GM12878 (cell line): ENCODE measurements at regions of chr17 and their contacts with region 1.

Region 1: GRCh38 chr17:37701496-37701898 is 43.4 kb downstream of the HNF1B start:
- DNase-seq: peak; percentile 16
- ATAC-seq: peak; percentile 93
- H3K4me3 ChIP-seq: no peak overlapping the region
- H3K27ac ChIP-seq: no peak overlapping the region
- H3K4me1 ChIP-seq: no peaks in the 10 kb centered on the region
- H3K27me3 ChIP-seq: no peaks in the 10 kb centered on the region
- CTCF ChIP-seq: peak; percentile 78 to 81 (median 80)
- EP300 ChIP-seq: no peak
- POLR2A ChIP-seq: no peak
- RAD21 ChIP-seq: peak; percentile 75

Region 2: DNA sequence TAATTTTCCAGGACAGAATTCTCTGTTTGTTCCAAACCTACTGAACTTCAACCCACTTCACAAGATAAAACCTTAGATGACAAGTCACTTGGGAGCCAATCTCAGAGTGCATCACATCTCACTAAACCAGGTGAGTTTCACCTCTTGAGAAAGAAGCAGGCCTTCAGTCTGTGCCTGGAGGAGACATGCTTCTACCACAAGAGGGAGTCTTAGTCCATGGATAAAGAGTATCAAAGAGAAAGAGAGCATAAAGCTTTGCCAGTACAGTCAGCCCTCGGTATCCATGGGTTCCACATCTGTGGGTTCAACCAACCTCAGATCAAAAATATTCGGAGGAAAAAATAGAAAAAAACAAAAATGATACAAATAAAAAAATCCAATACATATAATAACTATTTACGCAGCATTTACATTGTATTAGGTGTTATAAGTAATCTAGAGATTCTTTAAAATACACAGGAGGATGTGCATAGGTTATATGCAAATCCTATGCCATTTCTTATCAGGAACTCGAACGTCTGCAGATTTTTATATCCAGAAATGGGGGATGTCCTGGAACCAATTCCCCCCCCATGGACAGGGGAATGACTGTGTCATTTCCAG is 174.1 kb before region 1 on chr17:
- CTCF ChIA-PET with region 1: no interaction called
- POLR2A ChIA-PET with region 1: no interaction called
- RAD21 ChIA-PET with region 1: interaction called, 3 read pairs
- SMC1A ChIA-PET with region 1: no interaction called
- in situ Hi-C with region 1: no loop called
- intact Hi-C with region 1: loop called (anchors 10 kb)
- DNase-seq: no peak
- ATAC-seq: peak; percentile 85
- H3K4me3 ChIP-seq: no peak overlapping the region
- H3K27ac ChIP-seq: no peak overlapping the region
- H3K4me1 ChIP-seq: no peaks in the 10 kb centered on the region
- H3K27me3 ChIP-seq: no peaks in the 10 kb centered on the region
- CTCF ChIP-seq: peak; percentile 63 to 69 (median 63)
- EP300 ChIP-seq: no peak
- POLR2A ChIP-seq: no peak
- RAD21 ChIP-seq: peak; percentile 64

Region 3: DNA sequence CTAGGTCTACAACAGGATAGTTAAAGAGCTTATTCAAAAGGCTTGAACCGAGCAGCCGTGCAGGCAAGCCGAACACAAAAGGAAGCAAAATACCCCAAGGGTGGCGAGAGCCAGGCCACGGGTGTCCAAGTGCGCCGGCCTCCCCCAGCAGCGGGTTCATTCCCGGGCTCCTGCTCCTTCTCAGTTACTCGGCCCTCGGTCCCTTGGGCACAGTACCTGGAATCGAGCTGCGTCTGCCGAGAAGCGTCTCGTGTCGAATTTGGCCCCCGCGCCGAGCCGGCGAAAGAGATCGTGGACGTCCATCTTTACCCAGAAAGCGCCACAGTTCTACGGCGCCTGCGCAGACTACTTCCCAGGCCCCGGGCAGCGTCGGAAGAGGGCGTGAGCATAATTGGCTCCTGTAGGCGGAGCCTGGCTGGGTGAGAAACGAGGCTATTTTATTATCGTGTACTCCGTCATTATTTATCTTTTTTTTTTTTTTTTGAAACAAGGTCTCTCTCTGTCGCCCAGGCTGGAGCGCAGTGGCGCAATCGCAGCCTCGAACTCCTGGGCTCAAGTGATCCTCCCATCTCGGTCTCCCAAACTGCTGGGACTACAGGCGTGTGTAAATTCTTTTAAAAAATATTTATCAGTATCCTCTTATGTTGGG is 58.3 kb before region 1 on chr17 and contains the start of gene DDX52:
- CTCF ChIA-PET with region 1: no interaction called
- POLR2A ChIA-PET with region 1: no interaction called
- RAD21 ChIA-PET with region 1: no interaction called
- SMC1A ChIA-PET with region 1: no interaction called
- in situ Hi-C with region 1: no loop called
- intact Hi-C with region 1: loop called (anchors 10 kb)
- DNase-seq: peak; percentile 52
- ATAC-seq: peak; percentile 99
- H3K4me3 ChIP-seq: peak within 1 kb of the TSS; percentile 80
- H3K27ac ChIP-seq: peak within 1 kb of the TSS; percentile 58
- H3K4me1 ChIP-seq: no peaks in the 10 kb centered on the region
- H3K27me3 ChIP-seq: no peaks in the 10 kb centered on the region; a peak in 1 of 4 replicates
- CTCF ChIP-seq: no peak
- EP300 ChIP-seq: no peak
- POLR2A ChIP-seq: peak; percentile 88
- RAD21 ChIP-seq: no peak
- polyA plus RNA-seq, gene DDX52: 18.7 to 18.8 TPM

Region 4: GRCh38 chr17:37737081-37737480 is 35.6 kb after region 1 on chr17:
- CTCF ChIA-PET with region 1: interaction called, 4 read pairs
- POLR2A ChIA-PET with region 1: no interaction called
- RAD21 ChIA-PET with region 1: interaction called, 3 read pairs
- SMC1A ChIA-PET with region 1: interaction called, 8 read pairs
- in situ Hi-C with region 1: no loop called
- intact Hi-C with region 1: loop called (anchors 5 kb)
- DNase-seq: no peak
- ATAC-seq: peak; percentile 41
- H3K4me3 ChIP-seq: no peak overlapping the region
- H3K27ac ChIP-seq: no peak overlapping the region
- H3K4me1 ChIP-seq: 0 out of 2 replicates have a peak, but pooled peaks cover 3% of the 10 kb centered on the region
- H3K27me3 ChIP-seq: peaks cover 0 to 8% of the 10 kb centered on the region in 2 experiments; a peak in 2 of 4 replicates
- CTCF ChIP-seq: peak in 2 of 3 experiments; percentile 14 to 19; a peak in 1 of 6 replicates
- EP300 ChIP-seq: no peak
- POLR2A ChIP-seq: no peak
- RAD21 ChIP-seq: 0 out of 2 replicates have a peak, but pooled peaks have one; percentile 22